GM23248 (cell line): ENCODE measurements at regions of chr2 and their contacts with region 1.

Region 1: GRCh38 chr2:238784671-238785527 is 63.0 kb upstream of the TWIST2 start:
- DNase-seq: peak; percentile 93
- H3K4me3 ChIP-seq: peak overlapping the region; percentile 81
- H3K27ac ChIP-seq: peak overlapping the region; percentile 96
- H3K4me1 ChIP-seq: peaks cover 50% of the 10 kb centered on the region
- H3K27me3 ChIP-seq: no peaks in the 10 kb centered on the region

Region 2: DNA sequence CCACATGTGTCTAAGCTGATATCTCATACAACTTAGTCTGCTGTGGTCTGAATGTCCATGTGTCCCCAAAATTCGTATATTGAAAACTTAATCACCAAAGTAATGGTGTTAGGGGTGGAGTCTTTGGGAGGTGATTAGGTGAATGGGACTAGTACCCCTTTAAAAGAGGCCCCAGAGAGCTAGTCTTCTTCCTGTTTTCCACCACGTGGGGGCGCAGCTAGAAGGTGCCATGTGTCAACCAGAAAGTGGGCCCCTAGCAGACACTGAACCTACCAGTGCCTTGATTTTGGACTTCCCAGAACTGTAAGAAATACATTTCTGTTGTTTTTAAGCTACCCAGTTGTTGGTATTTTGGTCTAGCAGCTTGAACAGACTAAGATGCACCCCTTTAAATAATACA is 271.6 kb before region 1 on chr2:
- in situ Hi-C with region 1: loop called (anchors 10 kb)
- DNase-seq: peak; percentile 81
- H3K4me3 ChIP-seq: no peak overlapping the region
- H3K27ac ChIP-seq: no peak overlapping the region
- H3K4me1 ChIP-seq: peaks cover 24% of the 10 kb centered on the region
- H3K27me3 ChIP-seq: no peaks in the 10 kb centered on the region

Region 3: GRCh38 chr2:238684362-238685326 is 100.3 kb before region 1 on chr2:
- in situ Hi-C with region 1: loop called (anchors 10 kb)
- DNase-seq: peak; percentile 99
- H3K4me3 ChIP-seq: 0 out of 2 replicates have a peak overlapping the region, but pooled peaks have one; percentile 13
- H3K27ac ChIP-seq: peak overlapping the region; percentile 94
- H3K4me1 ChIP-seq: peaks cover 55% of the 10 kb centered on the region
- H3K27me3 ChIP-seq: no peaks in the 10 kb centered on the region

Region 4: DNA sequence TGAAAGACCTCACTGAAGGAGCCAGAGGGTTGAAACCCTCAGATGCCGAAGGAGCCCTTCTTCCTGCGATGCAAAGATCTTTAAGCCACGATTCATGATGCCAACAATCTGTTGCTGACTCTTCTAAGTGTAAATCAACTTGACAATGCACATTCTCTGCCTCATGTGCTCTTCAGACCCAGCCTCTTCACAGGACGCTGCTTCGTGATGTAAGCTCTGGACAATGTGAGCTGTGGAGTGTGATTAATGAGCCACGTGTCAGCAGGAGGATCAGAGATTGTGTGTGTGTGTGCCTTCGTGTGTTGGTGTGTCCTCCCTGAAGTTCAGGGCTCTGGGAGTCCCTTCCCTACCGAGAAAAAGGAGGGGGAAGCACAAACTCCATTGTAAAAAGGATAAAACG is 36.5 kb after region 1 on chr2:
- in situ Hi-C with region 1: no loop called
- DNase-seq: peak; percentile 78
- H3K4me3 ChIP-seq: 0 out of 2 replicates have a peak overlapping the region, but pooled peaks have one; percentile 10
- H3K27ac ChIP-seq: peak overlapping the region; percentile 54
- H3K4me1 ChIP-seq: peaks cover 18% of the 10 kb centered on the region
- H3K27me3 ChIP-seq: no peaks in the 10 kb centered on the region

Region 5: DNA sequence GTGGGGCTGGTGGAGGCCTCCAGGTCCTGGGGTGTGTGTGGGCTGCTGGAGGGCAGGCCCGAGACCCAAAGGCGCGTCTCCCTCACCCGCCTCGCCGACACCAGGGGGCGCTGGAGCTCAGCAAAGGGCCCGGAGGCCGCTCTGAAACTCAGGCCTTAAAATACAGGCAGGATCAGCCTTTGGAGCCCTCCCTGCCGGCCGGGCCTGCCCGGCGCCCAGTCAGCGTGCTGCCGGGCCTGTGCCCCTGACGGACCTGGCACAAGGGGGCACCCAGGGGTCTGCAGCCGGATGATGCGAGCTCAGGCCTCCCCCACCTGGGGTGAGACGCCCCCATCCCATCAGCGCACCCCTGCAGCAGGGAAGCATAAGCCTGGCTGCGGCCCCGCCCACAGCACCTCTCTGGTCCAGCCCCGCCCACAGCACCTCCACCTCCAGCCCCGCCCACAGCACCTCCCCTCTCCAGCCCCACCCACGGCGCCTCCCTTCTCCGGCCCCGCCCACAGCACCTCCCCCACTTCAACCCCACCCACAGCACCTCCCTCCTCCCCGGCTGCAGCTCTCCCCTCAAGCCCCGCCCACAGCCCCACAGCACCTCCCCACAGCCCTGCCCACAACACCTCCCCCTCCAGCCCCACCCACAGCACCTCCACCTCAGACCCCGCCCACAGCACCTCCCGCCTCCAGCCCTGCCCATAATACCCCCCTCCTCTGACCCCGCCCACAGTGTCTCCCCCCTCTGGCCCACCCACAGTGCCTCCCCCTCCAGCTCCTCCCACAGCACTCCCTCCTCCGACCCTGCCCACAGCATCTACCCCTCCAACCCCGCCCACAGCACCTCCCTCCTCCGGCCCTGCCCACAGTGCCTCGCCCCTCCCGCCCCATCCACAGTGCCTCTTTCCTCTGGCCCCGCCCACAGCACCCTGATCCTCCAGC is 1448.3 kb after region 1 on chr2:
- in situ Hi-C with region 1: no loop called
- DNase-seq: peak; percentile 88
- H3K4me3 ChIP-seq: peak overlapping the region; percentile 64
- H3K27ac ChIP-seq: no peak overlapping the region
- H3K4me1 ChIP-seq: peaks cover 8% of the 10 kb centered on the region
- H3K27me3 ChIP-seq: no peaks in the 10 kb centered on the region